Heart right ventricle (tissue), 16 donors: ENCODE measurements at regions of chr9 and their contacts with region 1.

Region 1: GRCh38 chr9:30732060-30732459 is 1652.4 kb upstream of the ACO1 start:
- DNase-seq: no peak
- ATAC-seq: no peak
- H3K4me3 ChIP-seq: no peak overlapping the region
- H3K27ac ChIP-seq: no peak overlapping the region
- H3K4me1 ChIP-seq: no peaks in the 10 kb centered on the region
- H3K27me3 ChIP-seq: no peaks in the 10 kb centered on the region
- CTCF ChIP-seq: no peak

Region 2: GRCh38 chr9:30718483-30718882 is 13.6 kb before region 1 on chr9:
- intact Hi-C with region 1: loop called in 1 of 10 experiments (anchors 2 kb)
- DNase-seq: no peak
- ATAC-seq: no peak
- H3K4me3 ChIP-seq: no peak overlapping the region
- H3K27ac ChIP-seq: no peak overlapping the region
- H3K4me1 ChIP-seq: no peaks in the 10 kb centered on the region
- H3K27me3 ChIP-seq: no peaks in the 10 kb centered on the region
- CTCF ChIP-seq: no peak

Region 3: DNA sequence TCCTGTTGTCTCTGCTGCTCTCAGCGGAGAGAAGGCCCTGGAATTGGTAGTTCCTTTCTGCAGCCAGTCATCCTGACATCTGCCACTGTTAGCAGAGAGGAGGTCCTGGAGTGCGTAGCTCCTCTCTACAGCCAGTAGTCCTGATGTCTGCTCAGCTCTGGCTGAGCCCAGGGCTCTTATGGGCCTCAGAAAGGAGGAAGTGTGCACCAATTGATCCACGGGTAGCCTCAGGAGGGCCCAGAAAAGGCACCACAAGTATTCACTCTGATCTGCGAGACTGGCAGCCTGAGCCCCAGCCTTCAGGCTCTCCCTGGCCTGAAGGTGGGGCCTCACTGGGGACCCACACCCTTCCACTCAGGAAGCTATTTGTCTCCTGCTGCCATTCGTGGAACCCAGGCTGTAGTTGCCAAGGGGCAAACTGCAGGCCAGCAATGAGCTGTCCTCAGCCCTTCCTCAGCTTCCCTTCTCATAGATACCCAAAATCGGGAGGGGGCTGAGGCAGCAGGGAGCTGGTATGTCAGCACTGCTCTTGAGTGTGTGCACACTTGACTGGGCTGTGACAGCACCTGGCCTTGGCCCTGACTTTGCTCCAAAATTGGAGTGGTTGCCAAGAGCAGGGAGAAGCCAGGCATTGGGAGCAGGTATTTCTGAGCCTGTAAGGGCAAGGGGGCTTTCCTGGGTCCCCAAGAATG is 602.9 kb after region 1 on chr9:
- intact Hi-C with region 1: no loop called
- DNase-seq: peak in 1 of 2 donors; percentile 8
- ATAC-seq: no peak
- H3K4me3 ChIP-seq: no peak overlapping the region
- H3K27ac ChIP-seq: peak overlapping the region in 6 of 10 donors; percentile 3 to 64 (median 47)
- H3K4me1 ChIP-seq: peaks cover 0 to 20% (median 12%) of the 10 kb centered on the region in 9 donors
- H3K27me3 ChIP-seq: no peaks in the 10 kb centered on the region
- CTCF ChIP-seq: no peak